ENCODE measurements at regions of chr12 and their contacts with region 1.

Region 1: GRCh38 chr12:30806989-30807694 is 52.4 kb upstream of the CAPRIN2 start:
- DNase-seq: peak in 2 of 5 donors; percentile 31 to 45
- H3K4me3 ChIP-seq: no peak overlapping the region
- H3K4me3 Mint-ChIP-seq: no peak overlapping the region
- H3K27ac ChIP-seq: no peak overlapping the region
- H3K27ac Mint-ChIP-seq: no peak overlapping the region
- H3K4me1 ChIP-seq: no peaks in the 10 kb centered on the region
- H3K4me1 Mint-ChIP-seq: no peaks in the 10 kb centered on the region
- H3K27me3 ChIP-seq: no peaks in the 10 kb centered on the region
- H3K27me3 Mint-ChIP-seq: peaks cover 5 to 29% of the 10 kb centered on the region in 2 donors

Region 2: GRCh38 chr12:29519585-29520182 is 1287.5 kb before region 1 on chr12:
- CTCF ChIA-PET with region 1: interaction called, 21 read pairs
- POLR2A ChIA-PET with region 1: no interaction called
- DNase-seq: peak in 1 of 5 donors; percentile 7
- H3K4me3 ChIP-seq: no peak overlapping the region
- H3K4me3 Mint-ChIP-seq: no peak overlapping the region
- H3K27ac ChIP-seq: no peak overlapping the region
- H3K27ac Mint-ChIP-seq: peak overlapping the region in 1 of 8 donors; percentile 58
- H3K4me1 ChIP-seq: no peaks in the 10 kb centered on the region
- H3K4me1 Mint-ChIP-seq: no peaks in the 10 kb centered on the region
- H3K27me3 ChIP-seq: no peaks in the 10 kb centered on the region
- H3K27me3 Mint-ChIP-seq: peaks cover 1 to 14% of the 10 kb centered on the region in 2 donors

Region 3: DNA sequence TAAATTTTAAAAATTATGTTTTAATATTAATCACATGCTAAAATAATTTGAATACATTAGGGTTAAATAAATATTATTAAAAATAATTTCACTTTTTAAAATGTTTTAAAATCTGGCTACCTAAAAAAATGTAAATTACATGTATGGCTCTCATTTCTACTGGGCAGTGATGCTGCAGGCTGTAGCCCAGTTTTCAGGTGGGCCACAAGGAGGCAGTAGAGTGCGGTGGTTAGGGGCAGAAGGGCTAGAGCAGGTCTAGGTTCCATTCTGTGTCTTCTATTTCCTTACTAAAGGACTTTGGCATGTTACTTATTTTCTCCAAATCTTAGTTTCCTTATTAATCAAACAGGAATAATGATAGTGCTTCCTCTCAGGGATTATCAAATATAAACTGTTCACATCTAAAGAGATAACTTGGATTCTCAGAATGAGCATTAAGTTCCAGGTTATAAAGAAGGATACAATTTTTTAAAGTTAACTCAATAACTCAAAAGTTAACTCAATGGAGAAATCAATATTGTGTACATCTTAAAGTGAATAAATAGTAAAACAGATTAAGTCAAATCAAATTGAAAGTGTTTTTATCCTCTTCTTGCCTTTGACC is 1254.7 kb before region 1 on chr12:
- CTCF ChIA-PET with region 1: interaction called, 12 read pairs
- POLR2A ChIA-PET with region 1: no interaction called
- DNase-seq: peak; percentile 30 to 69 (median 34)
- H3K4me3 ChIP-seq: no peak overlapping the region
- H3K4me3 Mint-ChIP-seq: no peak overlapping the region
- H3K27ac ChIP-seq: no peak overlapping the region
- H3K27ac Mint-ChIP-seq: no peak overlapping the region
- H3K4me1 ChIP-seq: no peaks in the 10 kb centered on the region
- H3K4me1 Mint-ChIP-seq: no peaks in the 10 kb centered on the region
- H3K27me3 ChIP-seq: no peaks in the 10 kb centered on the region
- H3K27me3 Mint-ChIP-seq: peaks cover 2 to 12% of the 10 kb centered on the region in 2 donors

Measured in CD8-positive, alpha-beta memory T cell (primary cell).